Activated CD4-positive, alpha-beta memory T cell treated with anti-CD3 and anti-CD28 coated beads, Interleukin-2, amount 10 ng/mL, durations not matched to agents 7 days and 5 days (primary cell): ENCODE measurements at regions of chr17 and their contacts with region 1.

Region 1: GRCh38 chr17:75749545-75750389 is 15.2 kb downstream of the GALK1 start:
- DNase-seq: peak; percentile 88
- H3K4me3 Mint-ChIP-seq: no peak overlapping the region
- H3K27ac Mint-ChIP-seq: no peak overlapping the region
- H3K4me1 Mint-ChIP-seq: peaks cover 19% of the 10 kb centered on the region
- H3K27me3 Mint-ChIP-seq: peaks cover 9% of the 10 kb centered on the region

Region 2: GRCh38 chr17:75456417-75457046 is 293.2 kb before region 1 on chr17 and contains the start of gene TMEM94:
- CTCF ChIA-PET with region 1: interaction called, 10 read pairs
- POLR2A ChIA-PET with region 1: no interaction called
- DNase-seq: peak; percentile 94
- H3K4me3 Mint-ChIP-seq: peak within 1 kb of the TSS; percentile 87
- H3K27ac Mint-ChIP-seq: peak within 1 kb of the TSS; percentile 72
- H3K4me1 Mint-ChIP-seq: peaks cover 35% of the 10 kb centered on the region
- H3K27me3 Mint-ChIP-seq: no peaks in the 10 kb centered on the region
- total RNA-seq, gene TMEM94: 76.4 to 81.9 TPM

Region 3: DNA sequence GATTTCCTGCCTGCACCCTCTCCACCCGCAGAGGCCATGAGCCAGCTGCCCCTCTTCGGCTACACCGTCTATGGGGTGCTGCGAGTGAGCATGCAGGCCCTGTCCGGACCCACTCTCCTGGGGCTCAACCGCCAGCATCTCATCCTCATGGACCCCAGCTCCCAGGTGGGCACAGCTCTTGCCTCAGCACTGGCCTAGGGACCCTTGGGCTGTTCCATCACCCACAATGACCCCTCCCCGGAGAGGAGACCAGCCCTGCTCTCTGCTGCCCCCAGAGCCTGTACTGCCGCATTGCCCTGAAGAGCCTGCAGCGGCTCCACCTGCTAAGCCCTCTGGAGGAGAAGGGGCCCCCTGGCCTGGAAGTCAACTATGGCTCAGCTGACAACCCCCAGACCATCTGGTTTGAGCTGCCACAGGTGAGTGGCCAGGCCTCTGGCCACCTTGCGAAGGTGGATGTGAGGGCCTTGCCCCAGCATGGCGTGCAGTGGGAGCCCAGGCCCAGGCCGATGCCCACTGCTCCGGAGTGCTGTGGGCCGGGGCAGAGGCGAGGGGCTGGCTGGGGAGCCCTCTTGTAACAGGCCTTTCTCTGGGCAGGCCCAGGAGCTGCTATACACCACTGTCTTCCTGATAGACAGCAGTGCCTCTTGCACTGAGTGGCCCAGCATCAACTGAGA is 123.8 kb before region 1 on chr17:
- CTCF ChIA-PET with region 1: interaction called, 149 read pairs
- POLR2A ChIA-PET with region 1: interaction called, 3 read pairs
- DNase-seq: no peak
- H3K4me3 Mint-ChIP-seq: no peak overlapping the region
- H3K27ac Mint-ChIP-seq: no peak overlapping the region
- H3K4me1 Mint-ChIP-seq: no peaks in the 10 kb centered on the region
- H3K27me3 Mint-ChIP-seq: no peaks in the 10 kb centered on the region

Region 4: DNA sequence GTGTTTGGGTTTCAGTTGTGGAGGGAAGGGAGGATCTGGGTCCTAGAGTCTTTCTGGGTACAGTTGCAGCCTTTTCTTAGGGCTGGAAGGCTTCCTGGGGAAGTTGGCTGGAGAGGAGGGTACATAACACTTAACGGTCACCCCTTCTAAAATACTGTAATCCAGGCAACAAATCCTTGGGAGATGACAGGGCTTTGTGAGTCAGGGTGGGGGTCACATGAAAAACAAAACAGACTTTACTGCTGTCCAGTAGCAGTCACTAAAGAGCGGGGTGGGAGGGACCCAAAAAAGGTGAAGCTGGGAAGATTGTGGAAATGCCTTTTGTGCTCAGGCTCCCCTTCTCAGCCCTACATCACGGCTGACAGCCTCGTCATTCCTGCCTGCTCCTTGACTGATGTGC is 76.3 kb before region 1 on chr17:
- CTCF ChIA-PET with region 1: interaction called, 133 read pairs
- POLR2A ChIA-PET with region 1: interaction called, 5 read pairs
- DNase-seq: no peak
- H3K4me3 Mint-ChIP-seq: no peak overlapping the region
- H3K27ac Mint-ChIP-seq: no peak overlapping the region
- H3K4me1 Mint-ChIP-seq: peaks cover 18% of the 10 kb centered on the region
- H3K27me3 Mint-ChIP-seq: no peaks in the 10 kb centered on the region

Region 5: GRCh38 chr17:75738218-75738802 is 11.5 kb before region 1 on chr17:
- CTCF ChIA-PET with region 1: interaction called, 34 read pairs
- POLR2A ChIA-PET with region 1: interaction called, 4 read pairs
- DNase-seq: peak; percentile 59
- H3K4me3 Mint-ChIP-seq: no peak overlapping the region
- H3K27ac Mint-ChIP-seq: no peak overlapping the region
- H3K4me1 Mint-ChIP-seq: peaks cover 11% of the 10 kb centered on the region
- H3K27me3 Mint-ChIP-seq: no peaks in the 10 kb centered on the region

Region 6: GRCh38 chr17:75784473-75785015 is 34.8 kb after region 1 on chr17 and contains the start of gene UNK:
- CTCF ChIA-PET with region 1: interaction called, 24 read pairs
- POLR2A ChIA-PET with region 1: interaction called, 39 read pairs
- DNase-seq: peak; percentile 96
- H3K4me3 Mint-ChIP-seq: peak within 1 kb of the TSS; percentile 90
- H3K27ac Mint-ChIP-seq: peak within 1 kb of the TSS; percentile 100
- H3K4me1 Mint-ChIP-seq: peaks cover 52% of the 10 kb centered on the region
- H3K27me3 Mint-ChIP-seq: no peaks in the 10 kb centered on the region
- total RNA-seq, gene UNK: 26.1 TPM

Region 7: DNA sequence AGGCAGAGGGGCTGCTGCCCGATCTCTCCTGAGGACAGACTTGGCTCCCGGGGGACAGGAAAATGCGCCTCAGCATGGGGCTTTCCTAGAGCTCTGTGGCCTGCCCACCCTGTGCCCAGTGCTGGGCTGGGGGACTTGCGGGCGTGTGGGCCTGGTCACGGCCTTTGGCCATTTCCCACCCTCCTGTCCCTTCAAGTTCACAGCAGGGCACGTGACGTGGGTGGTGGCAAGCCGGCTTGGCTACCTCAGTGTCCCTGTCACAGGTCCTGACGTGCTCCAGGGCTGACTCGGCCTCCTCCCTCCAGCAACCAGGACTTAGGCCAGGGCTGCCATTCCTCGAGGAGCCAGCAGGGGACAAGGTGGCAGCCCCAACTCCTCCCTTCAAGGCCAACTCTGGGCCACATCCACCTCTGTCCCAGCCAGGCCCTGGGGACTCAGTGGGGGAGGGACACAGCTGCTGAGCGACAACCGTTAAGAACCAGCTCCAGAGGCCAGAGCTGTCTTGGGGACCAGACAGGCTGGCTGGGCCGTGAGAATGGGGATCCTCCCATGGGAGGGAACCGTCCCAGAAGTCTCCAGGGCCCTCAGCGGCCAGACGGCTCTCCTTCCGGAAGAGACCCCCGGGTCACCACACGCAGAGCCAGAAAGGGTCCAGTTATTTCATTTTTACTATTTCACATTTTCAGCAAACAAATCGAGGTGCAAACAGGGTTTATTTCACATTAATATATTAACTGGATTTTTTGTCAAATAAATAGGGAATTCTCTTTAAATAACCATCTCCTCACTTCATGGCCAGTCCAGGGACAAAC is 95.5 kb after region 1 on chr17:
- CTCF ChIA-PET with region 1: interaction called, 17 read pairs
- POLR2A ChIA-PET with region 1: interaction called, 5 read pairs
- DNase-seq: peak; percentile 72
- H3K4me3 Mint-ChIP-seq: peak overlapping the region; percentile 56
- H3K27ac Mint-ChIP-seq: peak overlapping the region; percentile 81
- H3K4me1 Mint-ChIP-seq: peaks cover 33% of the 10 kb centered on the region
- H3K27me3 Mint-ChIP-seq: no peaks in the 10 kb centered on the region

Region 8: GRCh38 chr17:76179496-76180467 is 430.0 kb after region 1 on chr17:
- CTCF ChIA-PET with region 1: no interaction called
- POLR2A ChIA-PET with region 1: no interaction called
- DNase-seq: peak; percentile 56
- H3K4me3 Mint-ChIP-seq: peak overlapping the region; percentile 51
- H3K27ac Mint-ChIP-seq: peak overlapping the region; percentile 92
- H3K4me1 Mint-ChIP-seq: peaks cover 50% of the 10 kb centered on the region
- H3K27me3 Mint-ChIP-seq: no peaks in the 10 kb centered on the region